Sciatic nerve (tissue), 2 donors: ENCODE measurements at regions of chr12 and their contacts with region 1.

Region 1: GRCh38 chr12:124053851-124054250 is 80.8 kb downstream of the ZNF664 start:
- DNase-seq: peak; percentile 79
- ATAC-seq: peak; percentile 96

Region 2: DNA sequence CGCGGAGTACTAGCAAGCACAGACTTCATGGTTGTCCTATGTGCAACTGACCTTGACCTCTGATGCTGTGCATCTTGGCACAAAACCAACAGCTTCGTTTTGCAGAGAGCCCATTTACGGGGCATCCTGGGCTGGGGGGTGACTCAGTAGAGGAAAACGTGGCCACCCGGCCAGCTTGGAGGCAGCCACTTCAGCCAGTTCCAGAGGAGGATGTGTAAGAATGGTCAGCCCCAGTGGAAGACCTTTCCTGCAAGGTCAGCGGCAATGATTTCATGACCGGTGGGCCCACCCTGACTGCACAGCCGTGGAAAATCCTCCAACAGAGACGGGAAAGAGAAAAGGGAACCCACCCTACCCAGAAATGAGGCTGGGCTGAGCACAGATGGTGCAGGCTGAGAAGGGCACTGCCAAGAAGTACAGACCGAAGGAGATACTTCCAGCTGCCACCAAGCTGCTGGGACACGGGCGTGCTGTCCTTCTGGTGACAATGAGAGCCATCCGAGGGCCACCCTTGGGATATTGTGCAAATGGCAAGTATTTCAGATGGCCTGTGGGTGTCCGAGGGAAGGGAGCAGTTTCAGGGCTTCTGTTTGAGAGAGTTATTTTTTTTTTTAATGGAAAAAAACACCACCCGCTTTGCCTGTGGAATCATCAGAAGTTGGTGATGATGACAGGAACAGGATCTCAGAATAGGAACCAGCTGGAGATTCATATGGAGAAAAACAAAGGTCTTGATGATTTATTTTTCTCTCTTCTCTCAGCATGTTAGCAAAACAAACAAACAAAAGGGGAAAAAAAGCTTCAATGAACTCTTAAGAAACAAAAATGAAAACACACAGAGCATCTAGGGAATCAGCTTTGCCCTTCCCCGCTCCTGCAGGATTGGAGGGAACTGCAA is 120.8 kb after region 1 on chr12:
- intact Hi-C with region 1: no loop called
- DNase-seq: no peak
- ATAC-seq: peak; percentile 74

Region 3: GRCh38 chr12:124321040-124321481 is 267.2 kb after region 1 on chr12:
- intact Hi-C with region 1: loop called (anchors 5 kb)
- DNase-seq: peak; percentile 90
- ATAC-seq: peak; percentile 85